Common myeloid progenitor, CD34-positive (primary cell): ENCODE measurements at regions of chr5 and their contacts with region 1.

Region 1: GRCh38 chr5:112419986-112420864 is 1.1 kb upstream of the EPB41L4A start:
- DNase-seq: peak; percentile 63 to 78 (median 73)
- H3K4me3 ChIP-seq: peak overlapping the region; percentile 42 to 80 (median 67)
- H3K27ac ChIP-seq: no peak overlapping the region
- H3K4me1 ChIP-seq: peaks cover 0 to 30% (median 23%) of the 10 kb centered on the region in 4 experiments
- H3K27me3 ChIP-seq: peaks cover 26 to 86% (median 32%) of the 10 kb centered on the region in 5 experiments

Region 2: DNA sequence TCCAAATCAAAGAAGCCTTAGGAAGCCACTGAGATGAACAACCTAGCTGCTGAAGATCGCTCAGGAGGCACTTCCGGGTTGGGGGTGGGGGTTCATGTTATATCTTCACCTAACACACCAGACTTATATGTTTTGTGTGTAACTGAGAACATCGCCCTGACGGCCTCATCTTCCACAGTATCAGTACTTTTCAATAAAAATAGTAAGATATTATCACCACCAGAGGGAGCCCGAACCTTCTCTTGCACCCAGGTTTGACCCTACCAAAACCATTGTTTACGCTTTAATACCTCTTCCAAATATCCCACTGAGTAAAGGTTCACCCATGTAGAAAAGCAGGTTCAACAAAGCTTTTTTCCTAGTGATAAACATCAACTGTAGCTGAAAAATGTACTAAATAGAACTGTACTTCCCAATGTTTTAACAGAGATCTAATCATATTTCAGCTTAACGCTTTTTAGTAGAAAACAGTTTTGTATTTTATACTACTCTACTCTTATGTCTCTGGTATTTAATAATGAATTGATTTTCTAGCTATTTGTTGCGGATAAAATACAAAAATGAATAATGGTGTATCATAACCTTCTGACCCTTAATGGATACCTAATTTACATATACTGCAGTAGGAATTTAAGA is 245.1 kb before region 1 on chr5:
- CTCF ChIA-PET with region 1: interaction called, 28 read pairs
- POLR2A ChIA-PET with region 1: no interaction called
- DNase-seq: peak; percentile 45 to 66 (median 58)
- H3K4me3 ChIP-seq: no peak overlapping the region
- H3K27ac ChIP-seq: no peak overlapping the region
- H3K4me1 ChIP-seq: peaks cover 0 to 2% (median 0%) of the 10 kb centered on the region in 4 experiments
- H3K27me3 ChIP-seq: peaks cover 0 to 3% (median 2%) of the 10 kb centered on the region in 5 experiments

Region 3: GRCh38 chr5:112366987-112367386 is 53.2 kb before region 1 on chr5:
- CTCF ChIA-PET with region 1: no interaction called
- POLR2A ChIA-PET with region 1: no interaction called
- DNase-seq: peak in 1 of 3 donors; percentile 2
- H3K4me3 ChIP-seq: no peak overlapping the region
- H3K27ac ChIP-seq: no peak overlapping the region
- H3K4me1 ChIP-seq: no peaks in the 10 kb centered on the region
- H3K27me3 ChIP-seq: peaks cover 0 to 2% (median 0%) of the 10 kb centered on the region in 5 experiments